ENCODE measurements at regions of chr2 and their contacts with region 1.

Region 1: GRCh38 chr2:122960759-122961641 is 1064.1 kb upstream of the CNTNAP5 start:
- DNase-seq: peak; percentile 96
- ATAC-seq: peak; percentile 89
- H3K4me3 ChIP-seq: peak overlapping the region; percentile 54
- H3K27ac ChIP-seq: peak overlapping the region; percentile 85
- H3K4me1 ChIP-seq: peaks cover 27% of the 10 kb centered on the region
- H3K27me3 ChIP-seq: no peaks in the 10 kb centered on the region
- CTCF ChIP-seq: peak; percentile 42; the same call in 1 of the 2 replicates

Region 2: GRCh38 chr2:122748552-122749011 is 212.4 kb before region 1 on chr2:
- CTCF ChIA-PET with region 1: no interaction called
- POLR2A ChIA-PET with region 1: no interaction called
- intact Hi-C with region 1: loop called (anchors 1 kb)
- DNase-seq: peak; percentile 96
- ATAC-seq: peak; percentile 96
- H3K4me3 ChIP-seq: no peak overlapping the region
- H3K27ac ChIP-seq: peak overlapping the region; percentile 96
- H3K4me1 ChIP-seq: peaks cover 23% of the 10 kb centered on the region
- H3K27me3 ChIP-seq: no peaks in the 10 kb centered on the region
- CTCF ChIP-seq: peak; percentile 65

Region 3: DNA sequence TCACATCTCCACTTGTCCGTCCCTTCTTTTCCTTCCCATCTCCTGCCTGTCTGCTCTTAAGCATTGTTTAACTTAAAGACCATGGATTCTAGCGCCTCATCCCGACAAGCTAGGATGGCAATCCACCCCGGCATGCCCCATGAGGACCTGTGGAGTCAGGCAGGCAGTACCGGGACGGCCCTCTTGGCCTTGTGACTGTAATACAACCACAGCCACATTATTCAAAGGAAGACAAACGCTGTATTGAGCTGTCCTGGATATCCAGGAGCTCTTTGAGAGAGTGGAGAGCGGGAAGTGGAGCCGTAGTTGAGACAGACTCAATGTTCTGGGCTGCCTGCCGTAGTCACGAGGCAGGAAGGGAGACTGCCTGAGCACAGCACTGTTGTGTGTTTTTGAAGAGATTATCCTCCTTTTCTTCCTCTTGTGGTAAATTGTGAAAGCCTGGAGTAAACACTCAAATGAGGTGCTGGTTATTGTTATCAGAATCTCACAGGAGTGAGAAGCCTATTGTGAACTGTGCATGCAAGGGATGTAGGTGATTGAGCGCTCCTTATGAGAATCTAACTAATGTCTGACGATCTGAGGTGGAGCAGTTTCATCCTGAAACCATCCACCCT is 134.3 kb after region 1 on chr2:
- CTCF ChIA-PET with region 1: no interaction called
- POLR2A ChIA-PET with region 1: no interaction called
- intact Hi-C with region 1: loop called (anchors 5 kb)
- DNase-seq: no peak
- ATAC-seq: no peak
- H3K4me3 ChIP-seq: no peak overlapping the region
- H3K27ac ChIP-seq: no peak overlapping the region
- H3K4me1 ChIP-seq: peaks cover 38% of the 10 kb centered on the region
- H3K27me3 ChIP-seq: no peaks in the 10 kb centered on the region
- CTCF ChIP-seq: no peak

Region 4: GRCh38 chr2:123518367-123518766 is 557.4 kb after region 1 on chr2:
- CTCF ChIA-PET with region 1: no interaction called
- POLR2A ChIA-PET with region 1: no interaction called
- intact Hi-C with region 1: loop called (anchors 2 kb)
- DNase-seq: peak; percentile 88
- ATAC-seq: peak; percentile 83
- H3K4me3 ChIP-seq: no peak overlapping the region
- H3K27ac ChIP-seq: peak overlapping the region; percentile 56
- H3K4me1 ChIP-seq: peaks cover 39% of the 10 kb centered on the region
- H3K27me3 ChIP-seq: no peaks in the 10 kb centered on the region
- CTCF ChIP-seq: no peak

Region 5: DNA sequence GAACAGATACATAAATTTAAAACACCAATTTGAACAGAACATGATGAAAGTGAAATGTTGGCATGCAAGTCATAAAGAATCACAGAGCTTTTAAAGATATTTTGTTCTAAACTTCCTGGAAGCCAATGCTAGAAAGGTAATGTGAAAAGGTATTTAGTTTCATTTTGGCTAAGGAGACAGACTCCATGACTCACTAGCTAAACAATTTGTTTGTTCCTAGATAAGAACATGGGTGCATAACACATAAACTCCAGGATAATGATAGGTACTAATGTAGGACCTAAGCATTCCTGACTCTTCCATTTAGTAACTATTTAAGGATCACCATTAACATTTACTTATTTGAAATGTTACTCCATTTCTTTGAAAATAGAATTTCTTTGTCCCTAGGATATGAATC is 771.6 kb after region 1 on chr2:
- CTCF ChIA-PET with region 1: no interaction called
- POLR2A ChIA-PET with region 1: no interaction called
- intact Hi-C with region 1: loop called (anchors 5 kb)
- DNase-seq: peak; percentile 88
- ATAC-seq: peak; percentile 95
- H3K4me3 ChIP-seq: no peak overlapping the region
- H3K27ac ChIP-seq: peak overlapping the region; percentile 22; the same call in 1 of the 2 replicates
- H3K4me1 ChIP-seq: peaks cover 15% of the 10 kb centered on the region
- H3K27me3 ChIP-seq: no peaks in the 10 kb centered on the region
- CTCF ChIP-seq: no peak

Measured in PC-3 (cell line).